Activated T-helper 1 cell treated with anti-CD3 and anti-CD28 coated beads, Interleukin-12 subunit alpha, Interleukin-12 subunit beta, Interleukin-2, Interleukin-4 antibody, amounts not matched to agents 30 ng/mL and 10 ng/mL and 1 ng/mL, durations not matched to agents 14 hours and 24 hours and 36 hours (primary cell): ENCODE measurements at regions of chr2 and their contacts with region 1.

Region 1: GRCh38 chr2:197075759-197076337 is 149.3 kb upstream of the PGAP1 start:
- DNase-seq: no peak
- H3K4me3 Mint-ChIP-seq: no peak overlapping the region
- H3K27ac Mint-ChIP-seq: no peak overlapping the region
- H3K4me1 Mint-ChIP-seq: peaks cover 39% of the 10 kb centered on the region
- H3K27me3 Mint-ChIP-seq: no peaks in the 10 kb centered on the region

Region 2: DNA sequence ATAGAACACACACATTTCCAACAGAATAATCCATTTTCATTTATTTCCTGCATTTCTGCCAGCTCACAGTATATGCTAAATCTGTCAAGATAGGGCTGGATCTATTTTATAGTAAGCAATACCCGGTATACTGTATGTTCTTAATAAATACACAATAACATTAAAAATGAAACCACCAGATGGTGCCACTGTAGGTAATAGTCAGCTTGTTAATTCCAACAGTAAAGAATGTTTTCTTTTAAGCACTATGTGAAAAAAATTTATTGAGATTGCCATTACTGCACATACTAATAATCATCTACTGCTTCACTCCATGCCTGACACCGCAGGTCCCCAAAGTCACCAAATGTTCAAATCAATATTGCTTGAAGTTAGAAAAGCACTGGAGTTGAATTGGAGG is 17.9 kb before region 1 on chr2:
- intact Hi-C with region 1: loop called (anchors 2 kb)
- DNase-seq: no peak
- H3K4me3 Mint-ChIP-seq: no peak overlapping the region
- H3K27ac Mint-ChIP-seq: no peak overlapping the region
- H3K4me1 Mint-ChIP-seq: peaks cover 21% of the 10 kb centered on the region
- H3K27me3 Mint-ChIP-seq: no peaks in the 10 kb centered on the region